ENCODE measurements at regions of chrX and their contacts with region 1.

Region 1: GRCh38 chrX:121579016-121579760 is 531.8 kb downstream of the GLUD2 start:
- DNase-seq: peak in 3 of 4 experiments; percentile 4 to 43 (median 4)
- ATAC-seq: peak; percentile 76
- H3K4me3 ChIP-seq: no peak overlapping the region
- H3K27ac ChIP-seq: no peak overlapping the region
- H3K4me1 ChIP-seq: no peaks in the 10 kb centered on the region
- H3K27me3 ChIP-seq: no peaks in the 10 kb centered on the region
- CTCF ChIP-seq: peak; percentile 18 to 45 (median 40); a peak in 4 of 6 replicates
- EP300 ChIP-seq: no peak
- POLR2A ChIP-seq: no peak
- RAD21 ChIP-seq: peak; percentile 40 to 68

Region 2: DNA sequence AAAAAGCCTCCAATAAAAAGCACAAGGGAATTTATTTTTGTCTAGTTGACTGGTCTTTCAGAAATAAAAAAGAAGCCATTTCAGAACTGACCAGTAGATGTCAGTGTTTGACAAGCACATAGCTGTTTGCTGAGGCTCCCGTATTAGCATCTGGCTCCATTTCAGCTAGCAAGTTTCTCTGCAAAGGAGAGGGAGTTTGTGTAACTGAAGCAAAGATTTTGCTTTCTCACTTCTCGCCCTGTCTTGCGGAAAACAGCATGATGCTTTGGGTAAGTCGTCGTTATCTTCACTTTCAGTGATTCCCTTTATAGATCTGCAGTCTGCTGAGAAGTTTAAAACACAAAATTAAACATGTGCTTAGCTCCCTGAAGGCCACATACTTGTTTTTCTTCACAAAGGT is 789.1 kb before region 1 on chrX:
- CTCF ChIA-PET with region 1: interaction called, 6 read pairs
- POLR2A ChIA-PET with region 1: no interaction called
- in situ Hi-C with region 1: no loop called
- intact Hi-C with region 1: loop called (anchors 5 kb)
- DNase-seq: peak; percentile 36 to 63 (median 40)
- ATAC-seq: peak; percentile 77
- H3K4me3 ChIP-seq: no peak overlapping the region
- H3K27ac ChIP-seq: no peak overlapping the region
- H3K4me1 ChIP-seq: no peaks in the 10 kb centered on the region
- H3K27me3 ChIP-seq: no peaks in the 10 kb centered on the region; a peak in 1 of 5 replicates
- CTCF ChIP-seq: peak; percentile 60 to 76 (median 63)
- EP300 ChIP-seq: no peak
- POLR2A ChIP-seq: no peak
- RAD21 ChIP-seq: peak; percentile 78 to 87

Region 3: DNA sequence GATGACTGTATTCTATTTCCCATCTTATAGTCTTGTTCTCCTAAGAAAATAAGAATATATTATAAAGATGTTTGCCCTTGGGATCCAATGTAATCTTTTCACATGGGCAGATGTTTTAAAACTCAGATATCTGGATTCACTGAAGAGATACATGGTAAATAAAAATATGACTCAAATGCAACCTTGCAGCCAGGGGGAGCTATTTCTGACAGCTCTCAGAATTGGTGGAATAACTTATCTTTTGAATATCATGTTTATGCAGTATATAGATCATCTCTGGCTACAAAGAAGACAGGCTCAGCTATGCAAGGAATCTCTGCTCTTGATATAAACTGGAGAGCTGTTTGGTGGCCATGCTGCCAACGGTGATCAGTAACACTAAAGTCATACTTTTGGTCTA is 257.0 kb before region 1 on chrX:
- CTCF ChIA-PET with region 1: no interaction called
- POLR2A ChIA-PET with region 1: no interaction called
- in situ Hi-C with region 1: no loop called
- intact Hi-C with region 1: loop called (anchors 5 kb)
- DNase-seq: peak; percentile 4 to 15 (median 10)
- ATAC-seq: no peak; the same call in 2 of the 3 replicates
- H3K4me3 ChIP-seq: no peak overlapping the region
- H3K27ac ChIP-seq: no peak overlapping the region
- H3K4me1 ChIP-seq: no peaks in the 10 kb centered on the region
- H3K27me3 ChIP-seq: no peaks in the 10 kb centered on the region
- CTCF ChIP-seq: peak; percentile 10 to 43 (median 31); a peak in 4 of 6 replicates
- EP300 ChIP-seq: no peak
- POLR2A ChIP-seq: no peak
- RAD21 ChIP-seq: no peak; a peak in 1 of 4 replicates

Region 4: DNA sequence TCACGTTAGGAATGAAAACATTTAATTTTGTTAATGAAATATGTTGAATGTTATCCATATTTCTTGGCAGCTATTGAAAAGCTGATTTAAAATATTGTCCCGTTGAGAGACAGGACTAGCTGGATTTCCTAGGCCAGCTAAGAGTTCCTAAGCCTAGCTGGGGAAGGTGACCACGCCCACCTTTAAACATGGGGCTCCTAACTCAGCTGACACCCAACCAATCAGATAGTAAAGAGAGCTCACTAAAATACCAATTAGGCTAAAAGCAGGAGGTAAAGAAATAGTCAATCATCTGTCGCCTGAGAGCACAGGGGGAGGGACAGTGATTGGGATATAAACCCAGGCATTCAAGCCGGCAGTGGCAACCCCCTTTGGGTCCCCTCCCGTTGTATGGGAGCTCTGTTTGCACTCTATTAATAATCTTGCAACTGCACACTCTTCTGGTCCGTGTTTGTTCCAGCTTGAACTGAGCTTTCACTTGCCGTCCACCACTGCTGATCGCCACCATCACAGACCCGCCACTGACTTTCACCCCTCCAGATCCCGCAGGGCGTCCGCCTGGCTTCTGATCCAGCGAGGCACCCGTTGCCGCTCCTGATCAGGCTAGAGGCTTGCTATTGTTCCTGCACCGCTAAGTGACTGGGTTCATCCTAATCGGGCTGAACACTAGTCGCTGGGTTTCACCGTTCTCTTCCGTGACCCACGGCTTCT is 222.9 kb before region 1 on chrX:
- CTCF ChIA-PET with region 1: no interaction called
- POLR2A ChIA-PET with region 1: no interaction called
- in situ Hi-C with region 1: no loop called
- intact Hi-C with region 1: no loop called
- DNase-seq: peak in 1 of 4 experiments; percentile 80
- ATAC-seq: peak; percentile 94
- H3K4me3 ChIP-seq: peak overlapping the region; percentile 49
- H3K27ac ChIP-seq: peak overlapping the region; percentile 89
- H3K4me1 ChIP-seq: no peaks in the 10 kb centered on the region
- H3K27me3 ChIP-seq: no peaks in the 10 kb centered on the region
- CTCF ChIP-seq: no peak
- EP300 ChIP-seq: no peak
- POLR2A ChIP-seq: peak; percentile 83
- RAD21 ChIP-seq: no peak

Region 5: DNA sequence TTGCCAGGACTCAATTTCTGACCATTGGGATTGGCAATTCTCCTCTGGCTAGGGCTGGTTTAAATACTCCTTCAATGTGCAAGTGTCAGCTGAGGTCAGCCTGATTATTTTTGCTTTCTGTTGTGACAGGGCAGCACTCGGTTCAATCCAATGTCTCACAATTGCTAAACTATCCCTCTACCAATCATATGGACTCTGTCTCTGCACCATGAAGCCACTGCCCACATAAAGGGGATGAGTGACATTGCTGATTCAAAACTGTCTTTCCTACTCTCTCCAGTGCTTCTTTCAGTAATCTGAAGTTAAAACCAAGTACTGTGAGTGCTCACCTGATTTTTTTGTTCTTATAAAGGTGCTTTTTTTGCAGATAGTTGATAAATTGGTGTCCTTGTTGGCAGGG is 498.9 kb after region 1 on chrX:
- CTCF ChIA-PET with region 1: no interaction called
- POLR2A ChIA-PET with region 1: no interaction called
- in situ Hi-C with region 1: no loop called
- intact Hi-C with region 1: no loop called
- DNase-seq: no peak
- ATAC-seq: no peak
- H3K4me3 ChIP-seq: no peak overlapping the region
- H3K27ac ChIP-seq: no peak overlapping the region
- H3K4me1 ChIP-seq: no peaks in the 10 kb centered on the region
- H3K27me3 ChIP-seq: no peaks in the 10 kb centered on the region
- CTCF ChIP-seq: no peak
- EP300 ChIP-seq: no peak
- POLR2A ChIP-seq: no peak
- RAD21 ChIP-seq: no peak